ENCODE measurements at regions of chr5 and their contacts with region 1.

Region 1: DNA sequence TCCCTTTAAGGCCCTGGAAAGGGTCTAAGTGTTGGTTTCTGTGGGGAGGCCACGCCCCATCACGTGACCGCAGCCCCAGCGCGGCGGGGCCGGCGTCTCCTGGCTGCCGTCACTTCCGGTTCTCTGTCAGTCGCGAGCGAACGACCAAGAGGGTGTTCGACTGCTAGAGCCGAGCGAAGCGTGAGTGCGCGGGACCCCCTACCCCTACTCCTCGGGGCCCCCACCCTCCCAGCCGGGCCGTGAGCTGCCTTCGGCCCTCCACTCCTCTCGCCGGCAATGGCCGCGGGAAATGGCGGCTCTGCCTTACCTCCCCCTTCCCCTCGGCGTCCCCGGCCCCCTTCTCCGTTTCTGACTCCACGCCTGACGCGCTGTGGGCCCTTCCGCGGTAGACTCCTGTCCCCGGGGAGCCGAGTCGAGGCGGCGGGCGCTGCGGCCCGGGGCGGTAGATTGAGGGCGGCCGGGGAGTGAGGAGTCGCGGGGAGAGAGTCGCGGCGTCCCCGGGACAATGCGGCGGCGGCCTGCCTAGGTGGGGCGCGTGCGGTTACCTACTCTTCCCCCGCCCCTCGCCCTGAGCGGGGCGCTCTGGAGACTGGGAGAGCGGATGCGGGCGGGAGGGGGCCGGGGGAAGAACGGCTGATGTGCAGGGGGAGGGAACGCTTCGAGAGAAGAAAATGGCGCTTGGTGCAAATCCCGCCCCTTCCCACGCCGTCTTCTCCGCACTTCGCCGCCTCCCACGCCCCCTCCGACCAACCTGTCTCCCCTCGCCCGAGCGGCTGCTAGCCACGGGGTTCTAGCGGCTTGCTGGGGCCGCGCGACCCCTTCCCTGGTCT is at the start of gene SUB1:
- DNase-seq: peak; percentile 62
- ATAC-seq: peak; percentile 66
- H3K4me3 ChIP-seq: peak within 1 kb of the TSS; percentile 81
- H3K27ac ChIP-seq: peak within 1 kb of the TSS; percentile 79
- H3K4me1 ChIP-seq: peaks cover 42% of the 10 kb centered on the region
- H3K27me3 ChIP-seq: no peaks in the 10 kb centered on the region
- CTCF ChIP-seq: no peak
- EP300 ChIP-seq: peak; percentile 46 to 47; a peak in 1 of 4 replicates
- POLR2A ChIP-seq: peak; percentile 94
- RAD21 ChIP-seq: peak; percentile 6; the same call in 1 of the 2 replicates
- polyA plus RNA-seq, gene SUB1: 1,885 to 2,316 TPM

Region 2: GRCh38 chr5:32004404-32004803 is 581.3 kb before region 1 on chr5:
- CTCF ChIA-PET with region 1: no interaction called
- POLR2A ChIA-PET with region 1: no interaction called
- RAD21 ChIA-PET with region 1: no interaction called
- SMC1A ChIA-PET with region 1: no interaction called
- in situ Hi-C with region 1: no loop called
- intact Hi-C with region 1: no loop called
- DNase-seq: no peak
- ATAC-seq: peak; percentile 66
- H3K4me3 ChIP-seq: no peak overlapping the region
- H3K27ac ChIP-seq: no peak overlapping the region
- H3K4me1 ChIP-seq: no peaks in the 10 kb centered on the region
- H3K27me3 ChIP-seq: no peaks in the 10 kb centered on the region
- CTCF ChIP-seq: no peak
- EP300 ChIP-seq: no peak
- POLR2A ChIP-seq: no peak
- RAD21 ChIP-seq: no peak

Region 3: GRCh38 chr5:32355686-32356085 is 230.0 kb before region 1 on chr5:
- CTCF ChIA-PET with region 1: no interaction called
- POLR2A ChIA-PET with region 1: no interaction called
- RAD21 ChIA-PET with region 1: no interaction called
- SMC1A ChIA-PET with region 1: no interaction called
- in situ Hi-C with region 1: no loop called
- intact Hi-C with region 1: no loop called
- DNase-seq: no peak
- ATAC-seq: no peak
- H3K4me3 ChIP-seq: no peak overlapping the region
- H3K27ac ChIP-seq: no peak overlapping the region
- H3K4me1 ChIP-seq: no peaks in the 10 kb centered on the region
- H3K27me3 ChIP-seq: no peaks in the 10 kb centered on the region
- CTCF ChIP-seq: no peak
- EP300 ChIP-seq: no peak
- POLR2A ChIP-seq: no peak
- RAD21 ChIP-seq: no peak

Region 4: GRCh38 chr5:32406650-32407049 is 179.0 kb before region 1 on chr5:
- CTCF ChIA-PET with region 1: interaction called, 10 read pairs
- POLR2A ChIA-PET with region 1: no interaction called
- RAD21 ChIA-PET with region 1: interaction called, 4 read pairs
- SMC1A ChIA-PET with region 1: interaction called, 6 read pairs
- in situ Hi-C with region 1: no loop called
- intact Hi-C with region 1: no loop called
- DNase-seq: no peak
- ATAC-seq: peak; percentile 26; the same call in 1 of the 3 replicates
- H3K4me3 ChIP-seq: no peak overlapping the region
- H3K27ac ChIP-seq: no peak overlapping the region
- H3K4me1 ChIP-seq: no peaks in the 10 kb centered on the region
- H3K27me3 ChIP-seq: no peaks in the 10 kb centered on the region
- CTCF ChIP-seq: no peak
- EP300 ChIP-seq: no peak
- POLR2A ChIP-seq: no peak
- RAD21 ChIP-seq: no peak

Region 5: DNA sequence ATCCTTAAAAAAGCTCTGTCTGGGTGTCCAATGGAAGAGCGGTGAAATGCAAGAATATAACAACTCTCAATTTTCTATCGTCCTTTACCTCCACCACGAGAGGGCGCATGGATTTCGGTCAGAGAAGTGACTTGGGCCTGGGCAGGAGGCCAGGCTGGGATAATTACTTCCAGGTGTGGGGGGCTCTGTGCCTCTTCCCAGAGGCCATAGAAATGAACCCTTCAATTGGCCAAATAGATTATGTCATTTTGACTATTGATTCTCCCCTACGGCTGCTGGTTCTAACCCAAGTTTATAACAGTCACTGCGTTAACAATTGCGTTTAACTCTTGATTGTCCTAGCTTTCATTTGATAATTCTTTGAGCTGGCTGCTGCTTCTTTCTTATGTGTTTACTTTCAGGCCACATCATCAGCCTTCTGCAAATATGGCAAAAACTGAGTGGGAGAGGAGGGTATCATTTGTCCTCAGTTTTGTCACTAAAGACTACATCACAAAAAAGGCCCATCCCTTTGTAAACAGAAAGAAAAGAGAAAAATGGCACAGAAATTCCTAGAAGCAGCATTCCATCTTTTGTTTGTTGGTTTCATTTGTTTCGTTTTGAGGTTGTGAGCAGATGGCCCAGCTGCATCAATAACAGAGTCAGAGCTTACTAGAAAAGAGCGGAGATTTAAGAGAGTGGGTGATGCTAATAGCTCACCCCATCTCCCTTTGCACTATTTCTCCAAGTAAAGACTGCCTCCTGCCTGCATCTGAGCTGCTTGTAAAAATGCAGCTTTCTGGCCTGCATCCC is 95.7 kb before region 1 on chr5:
- CTCF ChIA-PET with region 1: interaction called, 353 read pairs
- POLR2A ChIA-PET with region 1: interaction called, 31 read pairs
- RAD21 ChIA-PET with region 1: interaction called, 258 read pairs
- SMC1A ChIA-PET with region 1: interaction called, 273 read pairs
- in situ Hi-C with region 1: no loop called
- intact Hi-C with region 1: loop called (anchors 1 kb)
- DNase-seq: peak; percentile 19
- ATAC-seq: peak; percentile 95
- H3K4me3 ChIP-seq: no peak overlapping the region
- H3K27ac ChIP-seq: no peak overlapping the region
- H3K4me1 ChIP-seq: no peaks in the 10 kb centered on the region
- H3K27me3 ChIP-seq: no peaks in the 10 kb centered on the region
- CTCF ChIP-seq: peak; percentile 67 to 81 (median 74)
- EP300 ChIP-seq: no peak
- POLR2A ChIP-seq: no peak
- RAD21 ChIP-seq: peak; percentile 96

Region 6: GRCh38 chr5:32511776-32512374 is 73.8 kb before region 1 on chr5:
- CTCF ChIA-PET with region 1: interaction called, 15 read pairs
- POLR2A ChIA-PET with region 1: no interaction called
- RAD21 ChIA-PET with region 1: interaction called, 6 read pairs
- SMC1A ChIA-PET with region 1: interaction called, 11 read pairs
- in situ Hi-C with region 1: no loop called
- intact Hi-C with region 1: no loop called
- DNase-seq: no peak
- ATAC-seq: peak; percentile 57
- H3K4me3 ChIP-seq: no peak overlapping the region
- H3K27ac ChIP-seq: no peak overlapping the region
- H3K4me1 ChIP-seq: no peaks in the 10 kb centered on the region
- H3K27me3 ChIP-seq: no peaks in the 10 kb centered on the region
- CTCF ChIP-seq: no peak
- EP300 ChIP-seq: no peak
- POLR2A ChIP-seq: no peak
- RAD21 ChIP-seq: no peak

Region 7: DNA sequence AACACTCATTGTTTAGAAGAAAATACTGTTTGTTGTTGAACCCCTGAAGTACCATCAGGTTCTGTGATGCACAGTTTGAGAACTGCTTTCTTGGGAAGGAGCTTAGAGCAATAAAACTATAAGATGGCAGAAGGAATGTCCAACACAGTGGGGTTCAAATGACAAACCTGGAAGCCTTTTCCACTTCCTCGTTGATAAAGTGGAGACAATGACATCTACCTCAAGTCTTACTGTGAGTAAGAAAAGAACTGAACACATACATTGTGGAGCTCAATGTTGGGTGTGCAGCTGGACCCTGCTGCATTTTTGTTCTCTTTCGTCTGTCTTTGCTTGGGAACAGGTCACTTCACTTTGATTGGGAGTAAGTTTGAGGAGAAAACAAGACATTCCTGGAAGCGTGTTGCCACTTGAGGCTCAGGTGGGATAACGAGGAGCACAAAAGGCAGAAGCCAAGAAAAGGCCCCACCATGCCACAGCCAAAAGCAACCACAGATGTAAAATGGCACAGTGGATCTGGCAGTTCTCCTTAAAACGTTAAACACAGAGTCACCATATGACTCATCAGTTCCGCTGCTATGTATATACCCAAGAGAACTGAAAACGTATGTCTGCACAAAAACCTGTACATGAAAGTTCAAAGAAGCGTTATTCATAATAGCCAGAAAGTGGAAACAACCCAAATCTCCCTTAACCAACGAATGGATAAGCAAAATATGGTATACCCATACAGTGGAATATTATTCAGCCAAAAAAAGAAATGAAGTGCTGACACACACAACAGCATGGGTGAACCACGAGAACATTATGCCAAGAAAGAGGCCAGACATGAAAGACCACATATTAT is 43.2 kb before region 1 on chr5:
- CTCF ChIA-PET with region 1: interaction called, 51 read pairs
- POLR2A ChIA-PET with region 1: interaction called, 44 read pairs
- RAD21 ChIA-PET with region 1: interaction called, 355 read pairs
- SMC1A ChIA-PET with region 1: interaction called, 505 read pairs
- in situ Hi-C with region 1: loop called (anchors 5 kb)
- intact Hi-C with region 1: loop called (anchors 1 kb)
- DNase-seq: peak; percentile 97
- ATAC-seq: peak; percentile 69
- H3K4me3 ChIP-seq: peak overlapping the region; percentile 12; the same call in 1 of the 2 replicates
- H3K27ac ChIP-seq: peak overlapping the region; percentile 96
- H3K4me1 ChIP-seq: peaks cover 55% of the 10 kb centered on the region
- H3K27me3 ChIP-seq: no peaks in the 10 kb centered on the region
- CTCF ChIP-seq: no peak
- EP300 ChIP-seq: peak; percentile 94 to 96
- POLR2A ChIP-seq: 0 out of 2 replicates have a peak, but pooled peaks have one; percentile 39
- RAD21 ChIP-seq: peak; percentile 8; the same call in 1 of the 2 replicates

Region 8: GRCh38 chr5:32613050-32613672 is 27.5 kb after region 1 on chr5:
- CTCF ChIA-PET with region 1: interaction called, 50 read pairs
- POLR2A ChIA-PET with region 1: interaction called, 8 read pairs
- RAD21 ChIA-PET with region 1: interaction called, 22 read pairs
- SMC1A ChIA-PET with region 1: interaction called, 31 read pairs
- in situ Hi-C with region 1: no loop called
- intact Hi-C with region 1: no loop called
- DNase-seq: peak; percentile 46
- ATAC-seq: peak; percentile 90
- H3K4me3 ChIP-seq: no peak overlapping the region
- H3K27ac ChIP-seq: no peak overlapping the region
- H3K4me1 ChIP-seq: no peaks in the 10 kb centered on the region
- H3K27me3 ChIP-seq: no peaks in the 10 kb centered on the region
- CTCF ChIP-seq: peak; percentile 80 to 96 (median 95); a peak in 5 of 6 replicates
- EP300 ChIP-seq: no peak
- POLR2A ChIP-seq: no peak
- RAD21 ChIP-seq: peak; percentile 98

Measured in GM12878 (cell line).